ENCODE measurements at regions of chr3 and their contacts with region 1.

Region 1: DNA sequence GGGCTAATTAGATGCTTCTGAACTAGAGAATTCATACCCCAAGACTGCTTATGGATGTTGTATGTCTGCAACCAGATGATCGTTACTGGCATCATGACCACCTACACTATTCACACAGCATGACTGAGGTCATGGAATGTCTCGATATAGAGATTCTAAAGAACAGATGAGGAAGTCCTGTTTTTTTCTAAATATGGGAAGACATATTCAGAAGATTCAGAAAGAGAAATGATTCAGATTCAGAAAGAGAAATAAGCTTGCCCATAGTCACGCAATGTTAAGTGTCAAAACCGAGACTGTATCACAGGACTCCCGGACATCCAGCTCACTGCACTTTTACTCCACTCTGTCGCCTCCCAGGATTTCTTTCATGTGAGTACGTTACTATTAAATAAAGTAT is 136.2 kb downstream of the TPRG1 start:
- DNase-seq: no peak
- CTCF ChIP-seq: no peak

Region 2: GRCh38 chr3:189249987-189250386 is 58.0 kb before region 1 on chr3:
- CTCF ChIA-PET with region 1: no interaction called
- POLR2A ChIA-PET with region 1: no interaction called
- DNase-seq: no peak
- CTCF ChIP-seq: no peak

Region 3: GRCh38 chr3:189334064-189334920 is 26.3 kb after region 1 on chr3:
- CTCF ChIA-PET with region 1: interaction called, 23 read pairs
- POLR2A ChIA-PET with region 1: no interaction called
- DNase-seq: no peak
- CTCF ChIP-seq: no peak

Measured in GM10248 (cell line).